ENCODE measurements at regions of chr22 and their contacts with region 1.

Region 1: DNA sequence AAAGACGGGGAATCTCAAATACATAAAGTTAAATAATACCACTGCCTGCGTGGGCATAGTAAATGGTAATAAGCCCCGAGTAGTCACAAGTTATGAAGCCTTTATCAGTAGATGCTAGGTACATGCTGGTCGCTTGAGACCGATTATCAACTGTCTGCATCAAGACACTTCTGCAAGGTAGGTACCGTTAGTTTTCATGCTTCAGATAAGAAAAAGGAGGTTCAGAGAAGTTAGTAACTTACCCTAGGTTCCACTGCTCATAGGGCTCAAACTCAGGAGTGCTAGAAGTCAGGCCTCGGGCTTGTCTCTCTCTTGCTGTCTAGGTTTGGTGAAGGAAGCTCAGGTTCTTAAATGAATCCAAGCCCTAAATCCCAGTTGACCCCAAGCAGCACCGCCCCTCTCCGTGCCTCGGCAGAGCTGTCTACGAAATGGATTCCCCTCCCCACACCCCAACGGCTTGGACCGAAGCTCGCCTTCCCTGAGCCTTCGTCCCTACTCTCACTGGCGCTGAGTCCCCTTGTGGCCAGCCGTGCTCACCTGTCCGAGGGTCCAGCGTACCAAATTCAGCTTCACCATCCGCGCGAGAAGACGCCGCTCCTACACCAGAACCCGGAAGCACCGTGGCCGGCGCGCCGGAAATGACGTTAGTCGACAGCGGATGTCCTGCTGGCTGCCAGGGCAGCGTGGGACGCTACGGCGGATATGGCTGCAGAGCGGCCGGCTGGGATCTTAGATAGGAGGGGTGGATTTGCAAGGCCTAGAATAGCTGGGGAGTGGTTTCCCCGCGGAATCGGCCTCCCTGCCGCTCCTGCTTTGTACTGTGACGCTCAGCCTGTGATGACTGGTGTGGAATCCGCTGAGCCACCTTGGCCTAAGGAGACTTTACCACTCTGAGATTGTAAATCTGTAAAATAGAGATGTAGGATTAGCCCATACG is at the start of gene TFIP11:
- DNase-seq: peak; percentile 91
- ATAC-seq: peak; percentile 99
- H3K4me3 ChIP-seq: peak within 1 kb of the TSS; percentile 86
- H3K27ac ChIP-seq: peak within 1 kb of the TSS; percentile 28
- H3K4me1 ChIP-seq: peaks cover 11% of the 10 kb centered on the region; the same call in 1 of the 2 replicates
- H3K27me3 ChIP-seq: no peaks in the 10 kb centered on the region
- CTCF ChIP-seq: no peak
- total RNA-seq, gene TFIP11: 22.4 and 33.5 TPM in 2 replicates

Region 2: DNA sequence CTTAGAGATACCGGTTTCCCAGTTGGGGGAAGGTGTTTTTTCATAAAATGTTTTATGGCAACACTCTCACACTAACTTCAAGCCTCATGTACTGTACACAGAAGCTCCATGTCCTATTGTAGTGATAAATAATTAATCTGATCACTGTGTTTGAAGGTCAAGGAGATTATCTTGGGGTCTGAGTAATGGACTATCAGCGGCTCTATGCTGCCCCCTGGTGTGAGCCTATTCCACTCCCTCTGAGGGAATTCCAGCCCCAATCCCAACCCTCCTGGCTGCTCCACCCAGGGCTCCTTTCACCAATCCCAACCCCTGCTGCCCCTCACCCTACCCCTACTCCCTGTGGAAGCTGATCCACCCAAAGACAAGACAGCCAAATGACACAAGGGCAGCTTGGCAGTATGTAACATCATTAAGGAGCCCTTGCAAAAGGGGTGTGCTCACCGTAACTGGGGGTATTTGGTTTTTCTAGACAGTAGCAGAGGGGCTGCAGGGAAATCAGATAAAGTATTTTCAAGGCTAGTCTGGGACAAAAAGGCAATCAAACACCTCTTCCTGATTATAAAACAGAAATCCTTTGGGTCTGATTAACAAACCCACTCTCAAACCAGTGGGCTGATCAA is 50.8 kb before region 1 on chr22:
- CTCF ChIA-PET with region 1: no interaction called
- POLR2A ChIA-PET with region 1: no interaction called
- intact Hi-C with region 1: no loop called
- DNase-seq: peak; percentile 50
- ATAC-seq: peak; percentile 84
- H3K4me3 ChIP-seq: no peak overlapping the region
- H3K27ac ChIP-seq: no peak overlapping the region
- H3K4me1 ChIP-seq: no peaks in the 10 kb centered on the region
- H3K27me3 ChIP-seq: no peaks in the 10 kb centered on the region
- CTCF ChIP-seq: peak; percentile 73

Region 3: GRCh38 chr22:26489447-26490031 is 22.6 kb before region 1 on chr22:
- CTCF ChIA-PET with region 1: no interaction called
- POLR2A ChIA-PET with region 1: no interaction called
- intact Hi-C with region 1: no loop called
- DNase-seq: no peak
- ATAC-seq: no peak
- H3K4me3 ChIP-seq: no peak overlapping the region
- H3K27ac ChIP-seq: no peak overlapping the region
- H3K4me1 ChIP-seq: peaks cover 18% of the 10 kb centered on the region; the same call in 1 of the 2 replicates
- H3K27me3 ChIP-seq: no peaks in the 10 kb centered on the region
- CTCF ChIP-seq: no peak

Region 4: DNA sequence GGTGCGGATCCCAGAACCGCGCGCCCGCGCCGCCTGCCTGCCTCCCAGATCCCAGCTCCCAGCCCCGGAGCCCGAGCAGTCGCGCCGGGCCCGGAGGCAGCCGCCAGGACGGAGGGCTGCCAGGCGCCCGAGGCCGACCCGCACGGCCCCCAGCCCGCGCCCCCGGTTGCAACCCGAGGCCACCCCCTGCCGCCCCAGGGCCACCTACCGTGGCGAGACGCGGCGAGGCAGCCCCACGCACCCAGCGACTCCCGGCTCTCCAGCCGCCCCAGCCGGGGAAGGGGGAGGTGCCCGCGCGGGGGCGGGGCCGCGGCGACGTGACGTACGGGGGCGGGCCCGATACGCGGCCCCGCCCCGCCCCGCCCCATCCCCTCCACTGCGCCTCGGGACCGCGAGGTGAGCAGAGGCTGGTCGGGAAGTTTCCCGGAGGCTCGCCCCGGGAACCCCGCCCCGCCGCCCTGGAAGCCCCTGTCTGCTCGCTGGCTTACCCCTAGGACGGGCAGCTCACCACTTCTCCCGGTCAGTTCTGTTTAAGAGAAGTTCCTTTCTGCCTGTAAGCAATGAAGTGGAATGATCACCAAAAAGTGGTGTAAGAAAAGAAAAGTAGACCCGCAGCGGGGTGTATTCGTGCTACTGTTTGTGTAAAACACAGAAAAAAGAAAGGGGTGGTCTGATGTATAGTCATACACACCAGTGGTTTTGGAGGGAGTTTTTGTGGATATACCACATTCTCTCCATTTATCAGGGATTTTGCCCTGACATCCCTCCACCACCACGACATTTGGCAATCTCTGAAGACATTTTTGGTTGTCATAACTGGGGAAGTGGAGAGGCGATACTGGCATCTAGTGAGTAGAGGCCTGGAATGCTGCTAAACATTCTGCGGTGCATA is 78.0 kb after region 1 on chr22 and contains the start of gene TPST2:
- CTCF ChIA-PET with region 1: no interaction called
- POLR2A ChIA-PET with region 1: no interaction called
- intact Hi-C with region 1: loop called (anchors 10 kb)
- DNase-seq: peak; percentile 70
- ATAC-seq: peak; percentile 83
- H3K4me3 ChIP-seq: peak within 1 kb of the TSS; percentile 89
- H3K27ac ChIP-seq: no peak within 1 kb of the TSS
- H3K4me1 ChIP-seq: peaks cover 10% of the 10 kb centered on the region
- H3K27me3 ChIP-seq: no peaks in the 10 kb centered on the region
- CTCF ChIP-seq: no peak
- total RNA-seq, gene TPST2: 7.9 and 8.1 TPM in 2 replicates

Measured in PC-3 (cell line).